ENCODE measurements at regions of chr1 and their contacts with region 1.

Region 1: DNA sequence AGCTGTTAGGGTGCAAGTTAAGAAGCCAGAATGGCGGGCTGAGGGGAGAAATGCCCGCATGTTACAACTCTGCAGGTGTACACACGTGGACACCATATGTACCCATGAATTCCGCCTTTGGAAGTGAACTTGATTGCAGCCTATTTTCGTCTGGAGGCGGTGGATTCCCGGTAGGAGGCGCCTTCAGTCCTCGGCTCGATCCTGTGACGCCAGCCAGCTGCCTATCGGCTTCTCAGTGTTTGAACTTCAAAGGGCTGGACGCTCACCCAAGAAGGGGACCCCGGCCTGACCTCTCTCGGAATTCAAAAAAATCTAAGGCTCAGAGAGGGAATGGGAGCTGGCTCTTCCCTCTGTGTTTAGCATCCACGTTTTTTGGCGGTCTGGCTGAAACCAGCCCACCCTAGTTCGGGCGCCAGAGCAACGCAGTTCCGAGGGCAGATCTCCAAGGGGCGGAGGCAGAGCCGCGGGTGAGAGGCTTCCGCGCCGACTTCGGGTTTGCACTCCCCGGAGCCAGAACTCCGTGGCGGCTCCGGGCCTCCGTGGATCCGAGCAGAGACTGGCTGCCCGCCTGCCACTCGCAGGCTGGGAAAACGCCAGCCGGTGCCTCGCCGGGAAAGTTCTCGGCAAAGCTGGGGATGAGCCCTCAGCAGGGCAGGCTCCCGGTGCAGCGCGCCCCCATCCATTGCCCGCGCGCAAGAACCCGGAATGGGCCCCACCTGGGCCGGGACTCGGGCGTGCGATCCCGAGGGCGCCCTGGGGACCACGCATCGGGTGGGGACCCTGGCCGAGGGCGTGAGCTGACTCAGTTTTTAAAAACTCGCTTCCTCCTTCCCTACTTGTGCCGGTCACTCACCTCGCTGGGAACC is 996 bp upstream of the TMEM51 start:
- DNase-seq: peak; percentile 90 to 94
- ATAC-seq: peak; percentile 81
- H3K4me3 ChIP-seq: peak overlapping the region; percentile 52 to 56
- H3K27ac ChIP-seq: peak overlapping the region in 1 of 2 donors; percentile 72
- H3K4me1 ChIP-seq: no peaks in the 10 kb centered on the region
- H3K27me3 ChIP-seq: no peaks in the 10 kb centered on the region

Region 2: GRCh38 chr1:15106608-15107007 is 45.9 kb before region 1 on chr1:
- intact Hi-C with region 1: no loop called
- DNase-seq: peak in 1 of 2 donors; percentile 72
- ATAC-seq: no peak
- H3K4me3 ChIP-seq: no peak overlapping the region
- H3K27ac ChIP-seq: no peak overlapping the region
- H3K4me1 ChIP-seq: no peaks in the 10 kb centered on the region
- H3K27me3 ChIP-seq: no peaks in the 10 kb centered on the region

Region 3: DNA sequence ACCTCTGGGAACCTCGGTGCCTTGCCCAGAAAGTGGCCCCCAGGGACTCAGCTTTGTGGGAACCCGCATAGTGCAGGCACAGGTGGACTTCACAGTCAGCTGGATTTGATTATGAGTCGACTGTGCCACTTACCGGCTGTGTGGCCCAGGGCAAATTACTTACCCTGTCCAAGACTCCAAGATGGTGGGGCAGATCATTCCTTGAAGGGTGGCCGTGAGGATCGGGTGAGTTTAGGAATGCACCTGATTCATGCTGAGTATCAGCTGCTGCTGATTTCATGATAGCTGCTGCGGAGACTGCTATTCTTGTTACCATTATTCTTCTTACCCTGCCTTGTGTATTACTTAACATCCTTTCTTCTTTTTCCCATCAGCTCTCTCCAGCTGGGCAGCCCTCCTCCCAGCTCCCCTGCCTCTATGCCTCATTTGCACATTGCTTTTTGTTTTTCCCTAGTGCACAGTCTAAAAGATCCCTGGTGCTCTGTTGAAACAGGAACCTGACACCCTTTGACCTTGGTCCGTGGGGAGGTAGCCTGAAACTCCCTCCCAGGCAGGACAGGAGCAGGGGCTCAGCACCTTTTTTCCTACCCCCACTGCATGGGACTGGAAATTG is 54.0 kb after region 1 on chr1:
- intact Hi-C with region 1: loop called (anchors 5 kb)
- DNase-seq: peak; percentile 26 to 62
- ATAC-seq: no peak
- H3K4me3 ChIP-seq: no peak overlapping the region
- H3K27ac ChIP-seq: peak overlapping the region in 1 of 2 donors; percentile 41
- H3K4me1 ChIP-seq: peaks cover 2 to 7% of the 10 kb centered on the region in 2 donors
- H3K27me3 ChIP-seq: no peaks in the 10 kb centered on the region

Region 4: GRCh38 chr1:15214527-15214926 is 62.0 kb after region 1 on chr1:
- intact Hi-C with region 1: loop called (anchors 5 kb)
- DNase-seq: peak; percentile 67 to 78
- ATAC-seq: peak; percentile 37
- H3K4me3 ChIP-seq: no peak overlapping the region
- H3K27ac ChIP-seq: peak overlapping the region in 1 of 2 donors; percentile 48
- H3K4me1 ChIP-seq: peaks cover 0 to 7% of the 10 kb centered on the region in 2 donors
- H3K27me3 ChIP-seq: no peaks in the 10 kb centered on the region

Region 5: DNA sequence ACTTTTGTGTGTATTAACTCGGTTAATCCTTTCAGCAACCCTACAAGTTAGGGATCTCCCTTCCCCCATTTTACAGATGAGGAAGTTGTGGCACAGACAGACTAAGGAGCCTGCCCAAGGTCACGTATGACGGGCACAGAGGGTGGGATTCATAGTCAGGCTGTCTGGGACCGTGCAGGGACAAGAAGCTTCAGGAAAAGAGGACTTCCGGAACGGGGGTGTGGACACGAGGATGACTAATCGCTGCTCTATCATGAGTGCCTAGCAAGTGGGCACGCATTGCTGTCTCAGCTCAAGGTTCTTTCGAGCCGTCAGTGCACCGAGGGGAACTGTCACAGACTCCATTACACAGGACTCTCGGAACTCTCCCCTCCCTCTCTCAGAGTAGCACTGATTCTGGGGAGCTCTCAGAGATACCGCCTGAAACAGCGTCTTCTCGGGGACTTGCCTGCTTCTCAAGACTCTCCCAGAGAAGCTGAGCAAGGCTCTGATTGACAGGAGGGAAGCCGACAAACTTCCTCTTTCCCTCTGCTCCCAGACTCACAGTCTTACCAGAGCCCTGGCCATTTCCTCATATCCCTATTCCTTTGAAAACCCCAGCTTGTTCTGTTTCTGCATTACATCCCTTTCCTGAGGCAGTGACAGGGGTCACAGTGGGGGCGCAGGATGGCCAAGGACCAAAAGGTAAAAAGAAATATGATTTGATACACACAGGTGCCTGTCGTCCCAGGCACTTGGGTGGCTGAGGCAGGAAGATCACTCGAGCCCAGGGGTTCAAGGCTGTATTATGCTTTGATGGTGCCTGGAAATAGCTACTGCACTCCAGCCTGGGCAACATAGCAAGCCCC is 108.8 kb after region 1 on chr1:
- intact Hi-C with region 1: no loop called
- DNase-seq: peak; percentile 73 to 90
- ATAC-seq: peak; percentile 54
- H3K4me3 ChIP-seq: no peak overlapping the region
- H3K27ac ChIP-seq: no peak overlapping the region
- H3K4me1 ChIP-seq: no peaks in the 10 kb centered on the region
- H3K27me3 ChIP-seq: peaks cover 0 to 3% of the 10 kb centered on the region in 2 donors

Region 6: GRCh38 chr1:15272009-15272788 is 119.6 kb after region 1 on chr1:
- intact Hi-C with region 1: loop called (anchors 2 to 5 kb)
- DNase-seq: peak in 1 of 2 donors; percentile 76
- ATAC-seq: peak; percentile 85
- H3K4me3 ChIP-seq: no peak overlapping the region
- H3K27ac ChIP-seq: no peak overlapping the region
- H3K4me1 ChIP-seq: no peaks in the 10 kb centered on the region
- H3K27me3 ChIP-seq: no peaks in the 10 kb centered on the region

Region 7: GRCh38 chr1:15409388-15410222 is 257.1 kb after region 1 on chr1 and contains the start of gene EFHD2:
- intact Hi-C with region 1: loop called in 1 of 2 experiments (anchors 10 kb)
- DNase-seq: peak; percentile 90 to 95
- ATAC-seq: peak; percentile 88
- H3K4me3 ChIP-seq: peak within 1 kb of the TSS; percentile 78 to 97
- H3K27ac ChIP-seq: no peak within 1 kb of the TSS
- H3K4me1 ChIP-seq: peaks cover 0 to 3% of the 10 kb centered on the region in 2 donors
- H3K27me3 ChIP-seq: no peaks in the 10 kb centered on the region
- total RNA-seq, gene EFHD2: 34.9 to 43.7 TPM

Measured in aorta (tissue), 5 donors.